Posterior vena cava (tissue), 2 donors: ENCODE measurements at regions of chr5 and their contacts with region 1.

Region 1: GRCh38 chr5:151107738-151108508 is 27.1 kb upstream of the TNIP1 start:
- DNase-seq: no peak

Region 2: GRCh38 chr5:151058891-151059489 is 48.9 kb before region 1 on chr5:
- intact Hi-C with region 1: loop called in 1 of 2 experiments (anchors 5 kb)
- DNase-seq: no peak

Region 3: DNA sequence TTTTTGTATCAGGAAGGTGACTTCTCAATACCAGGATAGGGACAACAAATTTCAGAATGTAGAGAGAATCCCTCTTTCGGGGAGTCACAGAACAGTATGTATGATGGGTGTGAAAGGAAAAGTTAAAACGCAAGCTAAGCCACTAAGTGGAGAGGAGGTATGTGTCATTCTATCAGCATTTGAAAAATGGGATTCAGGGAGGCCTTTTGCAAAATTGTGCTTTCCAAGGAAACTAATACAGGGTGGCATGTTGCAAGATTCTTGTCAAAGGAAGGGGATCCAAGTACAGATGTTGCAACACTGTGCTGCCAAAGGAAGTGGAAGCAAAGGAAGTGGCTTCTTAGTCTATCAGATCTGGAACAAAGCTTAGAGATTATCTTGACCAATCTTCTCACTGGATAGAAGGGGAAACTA is 14.4 kb before region 1 on chr5:
- intact Hi-C with region 1: loop called in 1 of 2 experiments (anchors 1 kb)
- DNase-seq: no peak